Activated CD4-positive, alpha-beta T cell treated with anti-CD3 and anti-CD28 coated beads for 36 hours (primary cell): ENCODE measurements at regions of chr2 and their contacts with region 1.

Region 1: DNA sequence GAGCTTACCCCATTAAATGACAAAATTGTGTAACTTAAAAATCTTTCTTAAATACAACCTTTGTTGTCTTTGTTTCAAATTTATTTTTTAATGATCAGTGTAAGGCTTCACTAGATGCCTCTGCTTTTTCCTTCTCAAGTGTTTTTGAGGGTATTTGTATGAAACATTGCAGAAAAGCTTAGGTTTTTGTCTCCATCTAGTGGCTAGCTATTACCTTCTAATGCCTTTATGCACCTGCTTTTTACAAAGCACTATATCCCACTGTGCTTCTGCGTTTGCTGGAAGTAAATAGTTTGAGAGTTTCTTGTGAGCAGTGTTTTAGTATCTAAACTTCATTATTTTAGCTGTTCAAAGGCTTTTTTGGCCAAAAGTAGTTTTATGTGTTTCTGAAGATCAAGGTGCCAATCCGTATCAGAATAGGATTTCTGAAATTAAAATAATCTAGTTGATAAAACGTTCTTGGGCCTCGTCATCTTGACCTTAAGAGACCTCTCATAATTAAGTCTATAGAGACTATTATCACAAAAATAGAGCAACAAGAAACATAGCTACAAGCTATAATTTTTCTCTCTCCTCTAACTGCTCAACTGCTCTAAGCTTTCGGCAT is 47.0 kb downstream of the IWS1 start:
- DNase-seq: no peak
- ATAC-seq: peak; percentile 75
- H3K4me3 Mint-ChIP-seq: no peak overlapping the region
- H3K27ac Mint-ChIP-seq: no peak overlapping the region
- H3K4me1 Mint-ChIP-seq: no peaks in the 10 kb centered on the region
- H3K27me3 Mint-ChIP-seq: no peaks in the 10 kb centered on the region

Region 2: DNA sequence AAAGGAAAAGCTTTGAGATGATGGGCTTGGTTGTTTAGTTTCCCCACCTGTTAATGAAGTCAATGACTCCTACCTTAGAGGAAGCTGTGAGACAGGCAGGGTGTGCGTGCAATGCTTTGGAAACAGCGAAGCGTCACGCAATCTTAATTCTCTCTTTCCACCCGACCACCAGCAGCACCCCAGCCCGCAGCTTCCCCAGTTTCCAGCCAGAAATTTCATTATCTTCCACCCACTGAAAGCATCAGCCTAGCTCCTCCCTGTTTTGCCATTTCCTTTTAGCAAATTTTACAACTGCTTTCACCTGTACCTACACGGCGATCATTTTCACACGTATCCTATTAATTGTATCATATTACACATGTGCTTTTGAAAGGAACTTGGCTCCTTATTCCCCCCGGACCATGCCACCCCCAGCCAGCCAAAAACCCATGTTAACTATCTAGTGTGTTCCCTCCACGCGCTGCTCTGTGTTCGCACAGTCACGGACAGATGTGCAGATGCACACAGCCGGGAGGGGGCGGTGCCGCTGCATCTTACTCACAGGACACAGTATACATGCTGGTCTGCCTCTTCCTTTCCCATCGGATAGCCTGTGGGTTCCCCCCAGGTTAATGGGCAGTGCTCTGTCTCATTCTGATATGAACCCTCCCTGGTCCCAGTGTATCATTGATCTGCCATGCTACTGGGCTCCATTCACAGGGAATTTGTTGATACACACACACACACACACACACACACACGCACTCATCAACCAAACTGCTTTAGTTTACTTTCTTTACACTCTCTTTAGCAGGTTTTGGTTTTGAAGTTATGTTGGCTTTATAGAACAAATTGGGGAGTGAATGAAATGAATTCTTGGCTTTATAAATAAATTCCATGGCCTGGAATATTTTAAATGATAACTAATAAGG is 281.6 kb before region 1 on chr2:
- CTCF ChIA-PET with region 1: interaction called, 21 read pairs
- POLR2A ChIA-PET with region 1: no interaction called
- intact Hi-C with region 1: loop called (anchors 1 kb)
- DNase-seq: peak; percentile 79
- ATAC-seq: peak; percentile 95
- H3K4me3 Mint-ChIP-seq: peak overlapping the region; percentile 58
- H3K27ac Mint-ChIP-seq: no peak overlapping the region
- H3K4me1 Mint-ChIP-seq: no peaks in the 10 kb centered on the region
- H3K27me3 Mint-ChIP-seq: no peaks in the 10 kb centered on the region

Region 3: DNA sequence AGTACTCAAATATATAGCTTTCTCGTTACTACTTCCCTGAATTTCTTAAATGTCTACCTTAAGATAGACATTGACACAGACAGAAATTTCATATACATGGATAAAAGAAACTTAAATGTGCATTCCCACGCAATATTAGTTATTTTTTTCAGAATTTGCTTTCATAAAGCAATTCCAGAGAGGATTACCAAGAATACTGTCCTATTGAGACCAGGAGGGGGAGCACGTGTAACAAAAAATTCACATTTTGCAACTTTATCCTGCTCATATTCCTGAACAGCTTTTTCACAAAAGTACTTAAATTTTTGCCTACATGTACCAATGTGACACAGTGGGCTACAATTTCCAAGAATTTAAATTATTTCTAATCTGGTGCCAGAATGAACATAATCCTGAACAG is 154.7 kb before region 1 on chr2:
- CTCF ChIA-PET with region 1: interaction called, 15 read pairs
- POLR2A ChIA-PET with region 1: no interaction called
- intact Hi-C with region 1: loop called (anchors 1 to 2 kb)
- DNase-seq: no peak
- ATAC-seq: no peak
- H3K4me3 Mint-ChIP-seq: no peak overlapping the region
- H3K27ac Mint-ChIP-seq: no peak overlapping the region
- H3K4me1 Mint-ChIP-seq: peaks cover 7% of the 10 kb centered on the region
- H3K27me3 Mint-ChIP-seq: no peaks in the 10 kb centered on the region

Region 4: DNA sequence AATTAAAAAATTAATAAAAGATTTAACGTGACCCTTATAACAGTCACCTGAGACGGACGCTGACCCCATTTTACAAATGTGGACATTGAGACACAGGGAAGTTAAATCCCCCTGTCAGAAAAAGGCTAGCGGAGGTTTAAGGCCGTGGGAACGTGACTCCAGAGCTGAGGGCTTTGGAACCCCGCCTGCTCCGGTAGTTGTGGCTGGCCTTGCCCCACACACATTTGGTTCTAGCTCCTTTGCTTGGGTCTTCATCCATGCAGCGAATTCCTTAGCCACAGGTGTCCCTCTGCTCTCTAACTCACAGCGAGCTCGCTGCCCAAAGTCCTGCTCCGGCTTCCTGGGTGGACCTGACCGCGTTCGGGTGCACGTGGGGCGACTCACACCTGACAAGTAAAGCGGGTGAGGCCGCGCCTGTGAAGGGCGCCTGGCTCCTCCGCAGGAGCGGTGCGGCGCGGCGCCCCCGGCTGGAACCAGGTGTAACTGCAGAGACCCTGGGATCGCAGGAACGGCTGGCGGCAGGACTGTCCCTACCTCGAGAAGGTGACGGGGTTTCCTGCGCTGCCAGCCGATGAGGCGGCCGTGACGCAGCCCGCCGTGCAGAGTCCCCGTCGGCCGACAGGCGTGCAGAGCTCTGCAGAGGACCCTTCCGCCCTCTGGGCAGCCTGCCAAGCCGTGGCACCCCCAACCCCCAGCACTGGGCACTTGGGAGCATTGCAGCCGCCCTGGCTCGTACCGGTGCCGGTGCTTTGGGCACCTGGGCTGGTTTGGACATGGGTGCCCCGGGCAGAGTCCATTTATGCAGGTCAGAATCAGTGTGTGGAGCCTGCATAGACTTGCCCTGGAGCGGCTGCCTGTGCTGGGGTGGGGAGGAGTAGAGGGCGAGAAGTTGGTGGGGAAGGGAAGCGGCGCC is 63.5 kb before region 1 on chr2:
- CTCF ChIA-PET with region 1: interaction called, 19 read pairs
- POLR2A ChIA-PET with region 1: no interaction called
- intact Hi-C with region 1: no loop called
- DNase-seq: peak; percentile 93
- ATAC-seq: peak; percentile 95
- H3K4me3 Mint-ChIP-seq: peak overlapping the region; percentile 62
- H3K27ac Mint-ChIP-seq: peak overlapping the region; percentile 56
- H3K4me1 Mint-ChIP-seq: peaks cover 31% of the 10 kb centered on the region
- H3K27me3 Mint-ChIP-seq: peaks cover 19% of the 10 kb centered on the region

Region 5: DNA sequence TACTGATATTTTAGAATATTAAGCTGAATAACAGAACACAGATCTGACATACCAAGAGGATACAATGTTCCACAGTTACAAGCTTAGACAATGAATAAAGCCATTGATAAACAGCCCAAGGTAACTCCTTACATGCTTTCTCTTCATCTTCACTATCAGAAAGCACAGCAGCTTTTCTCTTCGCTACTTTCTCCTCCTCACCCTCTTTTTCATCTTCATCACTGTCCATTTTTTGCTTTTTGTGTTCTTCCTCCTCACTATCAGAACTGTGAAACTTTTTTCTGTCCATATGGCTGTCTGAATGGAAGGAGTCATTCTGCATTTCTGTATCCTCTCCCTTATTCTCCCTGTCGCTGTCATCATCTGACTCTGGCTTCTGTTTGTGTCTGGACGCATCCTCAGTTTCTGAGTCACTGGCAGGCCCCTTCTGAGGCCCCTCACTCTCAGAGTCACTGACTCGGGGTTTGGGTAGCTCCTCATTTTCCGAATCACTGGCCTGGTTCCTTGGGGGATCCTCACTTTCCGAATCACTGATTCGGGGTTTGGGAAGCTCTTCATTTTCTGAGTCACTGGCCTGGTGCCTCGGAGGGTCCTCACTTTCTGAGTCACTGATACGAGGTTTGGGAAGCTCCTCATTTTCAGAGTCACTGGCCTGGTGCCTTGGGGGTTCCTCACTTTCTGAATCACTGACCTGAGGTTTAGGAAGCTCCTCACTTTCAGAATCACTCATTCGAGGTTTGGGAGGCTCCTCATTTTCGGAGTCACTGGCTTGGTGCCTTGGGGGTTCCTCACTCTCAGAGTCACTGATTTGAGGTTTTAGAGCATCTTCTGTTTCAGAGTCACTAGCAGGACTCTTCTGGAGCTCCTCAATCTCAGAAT is 25.5 kb after region 1 on chr2:
- CTCF ChIA-PET with region 1: interaction called, 10 read pairs
- POLR2A ChIA-PET with region 1: no interaction called
- intact Hi-C with region 1: no loop called
- DNase-seq: no peak
- ATAC-seq: peak; percentile 42
- H3K4me3 Mint-ChIP-seq: no peak overlapping the region
- H3K27ac Mint-ChIP-seq: no peak overlapping the region
- H3K4me1 Mint-ChIP-seq: peaks cover 28% of the 10 kb centered on the region
- H3K27me3 Mint-ChIP-seq: no peaks in the 10 kb centered on the region